GM12878 (cell line): ENCODE measurements at regions of chr2 and their contacts with region 1.

Region 1: GRCh38 chr2:57809230-57809629 is 237.4 kb upstream of the VRK2 start:
- DNase-seq: peak; percentile 37
- ATAC-seq: peak; percentile 92
- H3K4me3 ChIP-seq: no peak overlapping the region
- H3K27ac ChIP-seq: peak overlapping the region; percentile 62
- H3K4me1 ChIP-seq: peaks cover 8% of the 10 kb centered on the region; the same call in 1 of the 2 replicates
- H3K27me3 ChIP-seq: no peaks in the 10 kb centered on the region
- CTCF ChIP-seq: no peak
- EP300 ChIP-seq: no peak
- POLR2A ChIP-seq: no peak
- RAD21 ChIP-seq: no peak

Region 2: DNA sequence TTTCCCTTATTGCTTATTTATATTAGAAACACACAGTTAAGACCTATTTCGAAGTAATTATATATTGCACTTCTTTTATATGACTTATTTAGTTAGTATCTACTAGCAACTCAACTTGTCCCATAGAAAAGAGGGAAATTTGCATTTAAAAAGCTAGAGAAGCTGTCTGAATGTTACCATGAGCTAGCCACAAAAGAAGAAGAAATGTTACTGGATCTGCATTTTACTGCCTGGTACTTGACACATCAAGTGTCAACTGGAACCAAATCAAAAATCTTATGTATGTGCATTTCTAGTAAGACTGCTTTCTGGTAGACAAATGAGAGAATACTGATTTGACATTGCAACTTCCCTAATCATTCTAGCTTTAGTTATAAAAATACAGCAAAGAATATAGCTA is 187.2 kb before region 1 on chr2:
- CTCF ChIA-PET with region 1: no interaction called
- POLR2A ChIA-PET with region 1: no interaction called
- RAD21 ChIA-PET with region 1: no interaction called
- SMC1A ChIA-PET with region 1: no interaction called
- in situ Hi-C with region 1: no loop called
- intact Hi-C with region 1: no loop called
- DNase-seq: no peak
- ATAC-seq: no peak; the same call in 2 of the 3 replicates
- H3K4me3 ChIP-seq: no peak overlapping the region
- H3K27ac ChIP-seq: no peak overlapping the region
- H3K4me1 ChIP-seq: no peaks in the 10 kb centered on the region
- H3K27me3 ChIP-seq: no peaks in the 10 kb centered on the region
- CTCF ChIP-seq: no peak
- EP300 ChIP-seq: no peak
- POLR2A ChIP-seq: no peak
- RAD21 ChIP-seq: no peak

Region 3: DNA sequence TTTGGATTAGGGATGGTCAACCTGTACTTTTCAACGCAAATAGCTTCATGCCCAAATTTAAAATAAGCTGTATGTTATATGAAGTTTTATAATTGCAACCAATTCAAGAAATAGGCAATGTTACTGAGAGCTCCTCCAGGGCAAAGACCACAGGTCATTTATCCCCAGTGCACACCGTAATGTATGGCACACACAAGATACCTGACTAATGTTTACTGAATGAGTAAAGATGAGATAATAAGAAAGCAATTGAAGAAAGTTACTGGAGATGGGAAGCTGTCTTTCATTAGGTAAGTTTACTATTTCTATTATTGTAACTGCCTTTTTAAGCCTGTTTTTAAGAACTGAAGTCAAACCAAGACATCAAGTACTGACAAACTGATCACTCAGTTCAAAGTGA is 52.9 kb after region 1 on chr2:
- CTCF ChIA-PET with region 1: interaction called, 4 read pairs
- POLR2A ChIA-PET with region 1: no interaction called
- RAD21 ChIA-PET with region 1: no interaction called
- SMC1A ChIA-PET with region 1: interaction called, 10 read pairs
- in situ Hi-C with region 1: no loop called
- intact Hi-C with region 1: no loop called
- DNase-seq: no peak
- ATAC-seq: no peak
- H3K4me3 ChIP-seq: no peak overlapping the region
- H3K27ac ChIP-seq: no peak overlapping the region
- H3K4me1 ChIP-seq: no peaks in the 10 kb centered on the region
- H3K27me3 ChIP-seq: no peaks in the 10 kb centered on the region
- CTCF ChIP-seq: no peak
- EP300 ChIP-seq: no peak
- POLR2A ChIP-seq: no peak
- RAD21 ChIP-seq: no peak

Region 4: GRCh38 chr2:57890464-57890863 is 81.2 kb after region 1 on chr2:
- CTCF ChIA-PET with region 1: interaction called, 3 read pairs
- POLR2A ChIA-PET with region 1: interaction called, 4 read pairs
- RAD21 ChIA-PET with region 1: interaction called, 19 read pairs
- SMC1A ChIA-PET with region 1: interaction called, 33 read pairs
- in situ Hi-C with region 1: no loop called
- intact Hi-C with region 1: no loop called
- DNase-seq: no peak
- ATAC-seq: peak; percentile 60
- H3K4me3 ChIP-seq: no peak overlapping the region
- H3K27ac ChIP-seq: no peak overlapping the region
- H3K4me1 ChIP-seq: peaks cover 63% of the 10 kb centered on the region
- H3K27me3 ChIP-seq: no peaks in the 10 kb centered on the region
- CTCF ChIP-seq: no peak
- EP300 ChIP-seq: 0 out of 4 replicates have a peak, but pooled peaks of 1 of the 2 experiments have one; percentile 12
- POLR2A ChIP-seq: no peak
- RAD21 ChIP-seq: no peak

Region 5: DNA sequence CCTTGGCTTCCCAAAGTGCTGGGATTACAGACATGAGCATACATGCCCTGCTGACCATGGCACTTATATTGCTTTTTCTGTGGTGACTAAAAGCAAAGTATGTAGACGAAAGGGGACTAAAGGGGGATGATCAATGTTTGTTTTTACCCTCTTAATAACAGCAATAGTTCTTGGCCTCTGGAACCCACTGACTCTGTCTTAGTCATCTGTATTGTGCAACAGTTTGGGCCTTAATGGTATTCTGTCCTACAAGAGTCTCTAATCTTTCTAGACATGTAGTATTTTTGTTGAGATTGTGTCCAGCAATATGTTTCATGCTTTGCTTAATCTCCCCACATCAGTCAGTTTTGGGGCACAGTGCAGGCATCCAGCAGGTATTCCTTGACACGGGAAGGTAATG is 791.8 kb after region 1 on chr2:
- CTCF ChIA-PET with region 1: no interaction called
- POLR2A ChIA-PET with region 1: no interaction called
- RAD21 ChIA-PET with region 1: no interaction called
- SMC1A ChIA-PET with region 1: no interaction called
- in situ Hi-C with region 1: no loop called
- intact Hi-C with region 1: no loop called
- DNase-seq: no peak
- ATAC-seq: no peak
- H3K4me3 ChIP-seq: no peak overlapping the region
- H3K27ac ChIP-seq: no peak overlapping the region
- H3K4me1 ChIP-seq: no peaks in the 10 kb centered on the region
- H3K27me3 ChIP-seq: no peaks in the 10 kb centered on the region
- CTCF ChIP-seq: no peak
- EP300 ChIP-seq: no peak
- POLR2A ChIP-seq: no peak
- RAD21 ChIP-seq: no peak